RWPE1 (cell line): ENCODE measurements at regions of chr7 and their contacts with region 1.

Region 1: DNA sequence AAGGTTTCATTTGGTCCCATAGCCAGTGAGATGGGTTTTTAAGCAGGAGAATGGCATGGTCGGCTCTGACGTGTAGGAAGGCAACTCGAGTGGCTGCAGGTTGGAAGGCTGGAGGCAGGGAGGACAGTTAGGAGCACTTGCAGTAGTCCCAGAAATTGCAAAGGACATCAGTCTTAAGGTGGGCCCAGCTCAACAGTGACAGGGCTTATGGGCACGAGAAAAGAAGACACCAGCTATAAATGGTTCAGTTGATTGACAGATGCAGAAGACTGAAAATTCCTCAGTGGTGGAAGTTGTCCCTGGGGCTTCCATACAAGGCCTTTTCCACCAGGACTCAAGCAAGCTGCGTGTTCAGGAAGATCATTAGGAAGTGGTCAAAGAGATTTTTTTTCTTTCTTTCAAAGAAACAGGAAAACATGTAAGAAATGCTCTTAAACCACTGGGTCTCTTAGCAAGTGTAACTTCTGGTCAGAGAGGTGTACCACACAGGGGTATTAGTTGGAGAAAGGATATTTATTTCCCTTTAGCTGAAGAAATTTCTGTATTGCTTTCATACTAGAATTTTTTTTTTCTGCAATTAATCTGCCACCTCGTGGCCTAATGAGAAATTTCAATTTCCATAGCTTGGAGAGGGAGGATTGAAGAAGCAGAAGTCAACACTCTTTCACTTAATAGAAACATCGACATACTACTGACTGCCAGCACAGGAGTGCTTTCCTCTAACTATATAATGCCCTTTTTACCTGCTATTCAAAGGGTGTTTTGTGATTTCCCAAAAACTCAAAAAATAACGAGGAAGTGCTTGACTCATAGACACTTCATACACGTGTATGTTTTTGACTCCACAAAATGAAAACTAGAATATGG is 177.4 kb upstream of the NAMPT start:
- DNase-seq: peak; percentile 57
- H3K27ac ChIP-seq: no peak overlapping the region
- CTCF ChIP-seq: peak; percentile 76

Region 2: GRCh38 chr7:106176414-106177299 is 285.6 kb before region 1 on chr7:
- CTCF ChIA-PET with region 1: interaction called, 92 read pairs
- POLR2A ChIA-PET with region 1: no interaction called
- DNase-seq: peak; percentile 86
- H3K27ac ChIP-seq: no peak overlapping the region
- CTCF ChIP-seq: peak; percentile 99

Region 3: DNA sequence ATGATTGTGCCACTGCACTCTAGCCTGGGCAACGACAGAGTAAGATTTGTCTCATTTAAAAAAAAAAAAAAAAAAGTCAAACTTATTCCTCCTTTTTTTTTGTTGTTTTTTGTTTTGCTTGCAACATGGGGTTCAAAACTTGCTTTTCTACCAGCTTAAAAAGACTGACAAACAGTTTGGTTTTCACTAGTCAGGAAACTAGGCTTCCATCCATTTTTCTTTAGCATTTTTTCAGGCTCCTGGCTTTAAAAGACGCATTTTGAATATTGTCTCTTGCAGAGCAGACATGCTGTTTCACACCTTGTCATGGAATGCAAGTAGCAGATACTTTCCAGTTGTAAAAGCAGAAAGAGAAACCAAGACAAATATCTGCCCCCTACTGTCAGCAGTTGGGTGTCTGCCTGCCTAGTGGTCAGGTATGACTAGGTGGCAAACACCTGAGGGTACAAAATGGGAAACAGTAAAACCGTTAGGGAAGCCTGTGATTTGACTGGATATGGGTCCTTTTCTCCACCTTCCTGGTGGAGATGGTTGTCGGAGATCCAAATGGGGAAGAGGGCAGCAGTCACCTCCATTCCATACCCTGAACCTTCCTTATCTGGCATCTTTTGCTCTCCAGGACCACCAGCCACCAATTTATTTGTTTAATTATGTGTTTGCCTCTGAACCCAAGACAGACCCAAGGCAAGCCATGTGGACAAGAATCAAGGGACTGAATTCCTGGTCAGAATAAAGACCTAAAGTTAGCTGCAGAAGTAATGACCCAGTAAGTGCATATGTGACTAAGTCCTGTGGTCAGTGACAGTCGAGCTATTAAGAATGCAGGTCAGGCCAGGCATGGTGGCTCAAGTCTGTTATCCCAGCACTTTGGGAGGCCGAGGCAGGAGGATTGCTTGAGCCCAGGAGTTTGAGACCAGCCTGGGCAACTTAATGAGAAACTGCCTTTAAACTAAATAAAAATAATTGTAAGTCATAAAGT is 59.0 kb after region 1 on chr7:
- CTCF ChIA-PET with region 1: no interaction called
- POLR2A ChIA-PET with region 1: no interaction called
- DNase-seq: no peak
- H3K27ac ChIP-seq: no peak overlapping the region
- CTCF ChIP-seq: no peak